CD8-positive, alpha-beta memory T cell (primary cell): ENCODE measurements at regions of chr12 and their contacts with region 1.

Region 1: DNA sequence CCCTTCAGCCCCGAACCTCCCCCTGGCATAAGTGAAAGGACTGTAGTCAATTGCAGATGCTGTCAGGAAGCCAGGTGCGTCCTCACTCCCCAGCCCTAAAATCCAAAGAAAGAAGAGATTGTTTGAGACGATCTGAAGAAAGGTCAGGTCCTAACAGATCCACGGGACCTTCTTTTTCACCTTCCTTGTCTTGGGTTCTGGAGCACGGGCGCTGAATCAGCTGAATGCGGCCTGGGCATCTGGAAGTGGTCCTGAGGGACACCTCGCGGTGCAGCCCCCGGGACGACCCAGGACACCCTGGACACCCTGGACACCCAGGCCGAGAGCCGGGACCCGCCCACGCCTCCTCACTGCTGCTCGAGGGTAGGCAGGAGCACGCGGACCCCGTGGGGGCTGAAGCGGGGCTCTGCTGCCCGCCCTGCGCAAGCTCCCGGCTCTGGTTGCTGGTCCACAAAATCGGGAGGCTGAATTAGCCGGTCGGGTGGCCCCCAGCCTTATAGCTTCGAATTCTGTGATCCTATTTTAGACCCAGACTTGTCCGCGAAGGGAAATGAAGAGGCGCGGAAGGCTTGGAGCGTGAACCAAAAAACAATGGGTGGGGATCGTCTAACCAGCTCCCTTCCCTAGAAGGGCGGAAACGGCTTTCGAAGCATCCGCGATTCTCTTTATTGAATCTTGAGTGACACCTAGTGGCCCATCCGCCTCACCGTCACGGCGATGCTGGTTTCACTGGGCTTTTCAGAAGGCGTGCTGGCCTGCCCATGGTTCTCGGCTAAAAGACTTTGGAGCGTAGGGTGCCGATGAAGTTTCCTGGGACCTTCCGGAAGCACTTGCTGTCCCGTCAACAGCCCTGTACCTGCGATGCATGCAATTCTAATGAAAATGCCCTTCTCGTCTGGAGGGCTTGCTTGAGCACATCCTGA is 46.4 kb upstream of the PLXNC1 start:
- DNase-seq: peak; percentile 69 to 86 (median 76)
- H3K4me3 ChIP-seq: peak overlapping the region; percentile 57
- H3K4me3 Mint-ChIP-seq: peak overlapping the region; percentile 86 to 94 (median 88)
- H3K27ac ChIP-seq: peak overlapping the region; percentile 19
- H3K27ac Mint-ChIP-seq: peak overlapping the region in 7 of 8 donors; percentile 17 to 90 (median 70)
- H3K4me1 ChIP-seq: peaks cover 9% of the 10 kb centered on the region
- H3K4me1 Mint-ChIP-seq: peaks cover 5 to 12% (median 10%) of the 10 kb centered on the region in 3 donors
- H3K27me3 ChIP-seq: no peaks in the 10 kb centered on the region
- H3K27me3 Mint-ChIP-seq: peaks cover 23 to 44% of the 10 kb centered on the region in 2 donors

Region 2: DNA sequence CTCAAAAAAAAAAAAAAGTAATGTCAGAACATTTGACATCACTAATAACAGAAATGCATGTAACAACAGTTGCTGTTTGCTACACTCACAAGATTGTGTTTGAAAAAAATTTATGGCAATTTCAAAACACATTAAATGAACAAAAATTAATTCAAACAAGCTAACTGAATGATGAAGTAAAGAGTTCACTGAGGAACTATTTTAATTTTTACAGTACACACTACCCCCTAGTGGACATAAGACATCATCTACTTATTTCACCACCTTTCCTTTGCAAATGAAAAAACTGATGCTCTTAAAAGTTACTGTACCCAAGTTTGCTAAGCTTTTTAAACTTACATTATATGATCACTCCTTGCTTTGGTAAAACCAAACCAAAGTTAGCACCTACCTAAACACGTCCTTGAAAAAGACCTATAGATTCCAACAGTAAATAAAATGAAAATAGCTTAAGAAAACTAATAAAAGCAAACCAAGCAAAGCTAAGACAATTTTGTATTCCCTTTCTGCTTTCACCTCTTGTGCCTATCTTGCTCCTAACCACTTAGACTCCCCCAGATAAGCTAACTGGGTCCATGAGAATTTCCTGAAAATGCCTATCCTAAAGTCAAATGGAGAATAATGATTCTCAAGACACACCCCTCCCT is 682.5 kb before region 1 on chr12:
- CTCF ChIA-PET with region 1: interaction called, 30 read pairs
- POLR2A ChIA-PET with region 1: no interaction called
- DNase-seq: peak in 2 of 5 donors; percentile 38 to 47
- H3K4me3 ChIP-seq: no peak overlapping the region
- H3K4me3 Mint-ChIP-seq: no peak overlapping the region
- H3K27ac ChIP-seq: no peak overlapping the region
- H3K27ac Mint-ChIP-seq: peak overlapping the region in 5 of 8 donors; percentile 27 to 80 (median 55)
- H3K4me1 ChIP-seq: peaks cover 69% of the 10 kb centered on the region
- H3K4me1 Mint-ChIP-seq: peaks cover 74 to 96% (median 95%) of the 10 kb centered on the region in 3 donors
- H3K27me3 ChIP-seq: no peaks in the 10 kb centered on the region
- H3K27me3 Mint-ChIP-seq: no peaks in the 10 kb centered on the region

Region 3: GRCh38 chr12:93509482-93509881 is 592.5 kb before region 1 on chr12:
- CTCF ChIA-PET with region 1: interaction called, 254 read pairs
- POLR2A ChIA-PET with region 1: no interaction called
- DNase-seq: no peak
- H3K4me3 ChIP-seq: no peak overlapping the region
- H3K4me3 Mint-ChIP-seq: no peak overlapping the region
- H3K27ac ChIP-seq: no peak overlapping the region
- H3K27ac Mint-ChIP-seq: peak overlapping the region in 1 of 8 donors; percentile 32
- H3K4me1 ChIP-seq: no peaks in the 10 kb centered on the region
- H3K4me1 Mint-ChIP-seq: no peaks in the 10 kb centered on the region
- H3K27me3 ChIP-seq: no peaks in the 10 kb centered on the region
- H3K27me3 Mint-ChIP-seq: no peaks in the 10 kb centered on the region

Region 4: GRCh38 chr12:93569656-93570551 is 532.1 kb before region 1 on chr12:
- CTCF ChIA-PET with region 1: interaction called, 141 read pairs
- POLR2A ChIA-PET with region 1: interaction called, 7 read pairs
- DNase-seq: peak; percentile 65 to 80 (median 73)
- H3K4me3 ChIP-seq: peak overlapping the region; percentile 90
- H3K4me3 Mint-ChIP-seq: peak overlapping the region; percentile 91 to 97 (median 95)
- H3K27ac ChIP-seq: peak overlapping the region; percentile 83
- H3K27ac Mint-ChIP-seq: peak overlapping the region; percentile 25 to 98 (median 94)
- H3K4me1 ChIP-seq: peaks cover 17% of the 10 kb centered on the region
- H3K4me1 Mint-ChIP-seq: peaks cover 17 to 36% (median 34%) of the 10 kb centered on the region in 3 donors
- H3K27me3 ChIP-seq: no peaks in the 10 kb centered on the region
- H3K27me3 Mint-ChIP-seq: peaks cover 4 to 5% of the 10 kb centered on the region in 2 donors

Region 5: DNA sequence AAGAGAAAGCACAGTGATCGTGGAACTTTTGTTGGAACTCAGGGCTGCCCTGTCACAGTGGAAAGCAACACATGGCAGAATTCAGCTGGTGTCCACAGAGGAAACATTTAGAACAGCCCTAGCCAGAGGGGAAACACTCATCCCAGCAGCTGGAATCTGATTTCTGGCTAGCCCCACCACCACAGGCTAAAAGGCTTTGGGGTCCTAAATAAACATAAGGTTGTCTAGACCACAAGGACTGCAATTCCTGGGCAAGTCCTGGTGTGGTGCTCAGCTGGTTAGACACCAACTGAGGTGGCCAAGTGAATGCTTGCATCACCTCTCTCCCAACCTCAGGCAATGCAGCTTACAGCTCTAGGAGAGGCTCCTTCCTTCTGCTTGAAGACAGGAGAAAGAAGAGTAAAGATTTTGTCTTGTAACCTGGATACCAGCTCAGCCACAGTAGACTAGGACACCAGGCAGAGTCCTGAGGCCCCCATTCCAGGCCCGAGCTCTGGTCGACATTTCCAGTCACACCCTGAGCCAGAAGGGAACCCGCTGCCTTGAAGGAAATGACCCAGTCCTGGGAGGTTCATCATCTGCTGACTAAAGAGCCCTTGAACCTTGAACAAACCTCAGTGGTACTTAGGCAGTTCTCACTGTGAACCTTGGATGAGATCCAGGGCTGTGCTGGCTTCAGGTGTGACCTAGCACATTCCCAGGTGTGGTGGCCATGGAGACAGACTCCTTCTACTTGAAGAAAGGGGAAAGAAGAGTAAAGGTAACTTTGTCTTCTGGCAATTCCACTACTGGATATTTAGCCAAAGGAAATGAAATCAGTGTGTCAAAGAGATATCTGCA is 39.0 kb before region 1 on chr12:
- CTCF ChIA-PET with region 1: no interaction called
- POLR2A ChIA-PET with region 1: no interaction called
- DNase-seq: no peak
- H3K4me3 ChIP-seq: no peak overlapping the region
- H3K4me3 Mint-ChIP-seq: no peak overlapping the region
- H3K27ac ChIP-seq: no peak overlapping the region
- H3K27ac Mint-ChIP-seq: peak overlapping the region in 1 of 8 donors; percentile 2
- H3K4me1 ChIP-seq: no peaks in the 10 kb centered on the region
- H3K4me1 Mint-ChIP-seq: no peaks in the 10 kb centered on the region
- H3K27me3 ChIP-seq: no peaks in the 10 kb centered on the region
- H3K27me3 Mint-ChIP-seq: peaks cover 10 to 35% of the 10 kb centered on the region in 2 donors

Region 6: GRCh38 chr12:94074980-94075928 is 26.7 kb before region 1 on chr12:
- CTCF ChIA-PET with region 1: interaction called, 19 read pairs
- POLR2A ChIA-PET with region 1: no interaction called
- DNase-seq: no peak
- H3K4me3 ChIP-seq: no peak overlapping the region
- H3K4me3 Mint-ChIP-seq: peak overlapping the region in 1 of 7 donors; percentile 1
- H3K27ac ChIP-seq: no peak overlapping the region
- H3K27ac Mint-ChIP-seq: no peak overlapping the region
- H3K4me1 ChIP-seq: peaks cover 13% of the 10 kb centered on the region
- H3K4me1 Mint-ChIP-seq: peaks cover 8 to 14% (median 12%) of the 10 kb centered on the region in 3 donors
- H3K27me3 ChIP-seq: no peaks in the 10 kb centered on the region
- H3K27me3 Mint-ChIP-seq: peaks cover 24 to 43% of the 10 kb centered on the region in 2 donors

Region 7: DNA sequence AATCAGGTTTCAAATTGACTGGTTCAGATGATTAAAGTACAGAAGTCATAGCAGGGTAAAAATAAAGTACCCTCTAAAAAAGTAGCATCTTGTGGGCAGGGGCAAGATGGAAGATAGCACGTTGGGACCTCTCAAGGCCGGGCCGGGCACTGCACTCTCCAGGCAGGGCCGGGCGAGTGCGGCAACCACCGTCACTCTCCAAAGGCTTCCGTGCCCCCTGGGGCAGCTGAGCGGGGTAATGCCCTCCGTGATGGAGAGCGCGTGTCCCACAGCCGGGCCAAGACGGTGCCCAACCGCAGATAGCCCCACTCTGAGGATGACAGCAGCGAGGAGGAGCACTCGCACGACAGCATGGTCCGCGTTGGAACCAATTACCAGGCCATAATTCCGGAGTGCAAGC is 37.8 kb after region 1 on chr12:
- CTCF ChIA-PET with region 1: no interaction called
- POLR2A ChIA-PET with region 1: no interaction called
- DNase-seq: no peak
- H3K4me3 ChIP-seq: no peak overlapping the region
- H3K4me3 Mint-ChIP-seq: no peak overlapping the region
- H3K27ac ChIP-seq: no peak overlapping the region
- H3K27ac Mint-ChIP-seq: peak overlapping the region in 1 of 8 donors; percentile 50
- H3K4me1 ChIP-seq: no peaks in the 10 kb centered on the region
- H3K4me1 Mint-ChIP-seq: no peaks in the 10 kb centered on the region
- H3K27me3 ChIP-seq: no peaks in the 10 kb centered on the region
- H3K27me3 Mint-ChIP-seq: no peaks in the 10 kb centered on the region

Region 8: GRCh38 chr12:94779485-94779884 is 677.5 kb after region 1 on chr12:
- CTCF ChIA-PET with region 1: no interaction called
- POLR2A ChIA-PET with region 1: no interaction called
- DNase-seq: no peak
- H3K4me3 ChIP-seq: no peak overlapping the region
- H3K4me3 Mint-ChIP-seq: no peak overlapping the region
- H3K27ac ChIP-seq: no peak overlapping the region
- H3K27ac Mint-ChIP-seq: no peak overlapping the region
- H3K4me1 ChIP-seq: no peaks in the 10 kb centered on the region
- H3K4me1 Mint-ChIP-seq: no peaks in the 10 kb centered on the region
- H3K27me3 ChIP-seq: no peaks in the 10 kb centered on the region
- H3K27me3 Mint-ChIP-seq: peaks cover 24 to 62% of the 10 kb centered on the region in 2 donors